Calu3 (cell line): ENCODE measurements at regions of chr3 and their contacts with region 1.

Region 1: GRCh38 chr3:43215663-43216275 is 70.6 kb upstream of the SNRK start:
- DNase-seq: peak; percentile 33
- H3K4me3 Mint-ChIP-seq: no peak overlapping the region
- H3K27ac Mint-ChIP-seq: peak overlapping the region; percentile 92
- H3K4me1 Mint-ChIP-seq: peaks cover 55% of the 10 kb centered on the region
- H3K27me3 Mint-ChIP-seq: no peaks in the 10 kb centered on the region
- CTCF ChIP-seq: peak; percentile 25

Region 2: DNA sequence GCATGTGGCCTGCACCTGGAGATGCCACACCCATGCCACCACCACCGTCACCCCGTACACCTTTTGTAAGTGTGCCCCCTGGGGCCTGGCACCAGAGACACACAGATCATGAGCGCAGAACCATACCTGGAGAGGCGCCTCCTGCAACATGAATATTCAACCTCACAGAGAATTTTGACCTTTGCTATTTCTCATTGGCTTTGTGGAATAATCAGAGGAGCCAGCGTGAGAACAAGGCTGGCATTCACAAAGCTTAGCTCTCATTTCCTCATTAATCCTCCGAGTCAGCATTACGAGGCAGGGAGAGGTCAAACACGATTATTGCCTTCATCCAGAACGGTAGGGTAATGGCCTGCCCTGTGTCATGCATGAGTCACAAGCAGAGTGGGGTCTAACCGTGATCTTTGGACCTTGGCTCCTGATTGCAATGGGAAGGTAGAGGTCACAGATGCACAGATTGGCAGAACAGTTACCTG is 36.8 kb before region 1 on chr3:
- CTCF ChIA-PET with region 1: interaction called, 9 read pairs
- intact Hi-C with region 1: loop called (anchors 1 kb)
- DNase-seq: peak; percentile 75
- H3K4me3 Mint-ChIP-seq: no peak overlapping the region
- H3K27ac Mint-ChIP-seq: peak overlapping the region; percentile 78
- H3K4me1 Mint-ChIP-seq: peaks cover 65% of the 10 kb centered on the region
- H3K27me3 Mint-ChIP-seq: no peaks in the 10 kb centered on the region
- CTCF ChIP-seq: no peak

Region 3: DNA sequence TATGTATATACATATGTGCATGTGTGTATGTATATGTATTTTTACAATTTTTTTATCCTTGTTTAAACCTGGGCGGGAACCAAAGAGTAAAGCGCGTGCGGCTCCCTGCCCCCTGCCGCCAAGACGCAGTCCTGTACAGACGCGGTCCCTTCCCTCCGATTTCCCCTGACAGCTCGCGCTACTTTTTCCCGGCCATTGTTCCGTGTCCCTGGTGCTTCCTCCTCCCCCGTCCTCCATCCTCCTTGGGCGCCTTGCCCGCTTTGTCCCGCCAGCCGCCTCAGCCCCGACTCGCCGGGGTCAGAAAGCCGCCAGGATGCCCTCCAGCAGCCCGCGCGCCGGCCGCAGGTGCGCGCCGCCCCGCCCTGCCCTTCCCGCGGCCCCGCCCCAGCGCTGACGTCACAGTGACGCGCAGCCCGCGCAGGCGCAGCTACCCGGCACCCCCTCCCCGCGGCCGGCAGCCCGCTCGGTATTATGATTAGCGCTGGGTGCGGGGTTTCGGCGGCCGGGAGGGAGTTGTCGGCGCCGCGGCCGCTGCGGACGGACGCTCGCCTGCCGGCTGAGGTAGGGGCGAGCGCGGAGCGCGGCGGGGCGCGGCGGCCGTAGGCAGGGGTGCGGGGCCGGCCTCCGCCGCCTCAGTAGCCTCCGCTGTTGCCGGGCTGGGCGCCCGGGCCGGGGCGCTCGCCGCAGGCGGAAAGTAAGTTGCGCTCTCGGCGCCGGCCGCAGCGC is 70.5 kb after region 1 on chr3 and contains the start of gene SNRK:
- CTCF ChIA-PET with region 1: interaction called, 4 read pairs
- intact Hi-C with region 1: loop called (anchors 2 kb)
- DNase-seq: peak; percentile 95
- H3K4me3 Mint-ChIP-seq: peak within 1 kb of the TSS; percentile 77
- H3K27ac Mint-ChIP-seq: peak within 1 kb of the TSS; percentile 89
- H3K4me1 Mint-ChIP-seq: peaks cover 30% of the 10 kb centered on the region
- H3K27me3 Mint-ChIP-seq: no peaks in the 10 kb centered on the region
- CTCF ChIP-seq: no peak
- total RNA-seq, gene SNRK: 21.0 and 21.8 TPM in 2 replicates

Region 4: GRCh38 chr3:43378066-43378935 is 162.5 kb after region 1 on chr3:
- CTCF ChIA-PET with region 1: interaction called, 3 read pairs
- intact Hi-C with region 1: loop called (anchors 2 kb)
- DNase-seq: peak; percentile 67
- H3K4me3 Mint-ChIP-seq: no peak overlapping the region
- H3K27ac Mint-ChIP-seq: no peak overlapping the region
- H3K4me1 Mint-ChIP-seq: no peaks in the 10 kb centered on the region
- H3K27me3 Mint-ChIP-seq: no peaks in the 10 kb centered on the region
- CTCF ChIP-seq: peak; percentile 51

Region 5: GRCh38 chr3:43742920-43743319 is 527.2 kb after region 1 on chr3:
- CTCF ChIA-PET with region 1: no interaction called
- intact Hi-C with region 1: no loop called
- DNase-seq: no peak
- H3K4me3 Mint-ChIP-seq: no peak overlapping the region
- H3K27ac Mint-ChIP-seq: no peak overlapping the region
- H3K4me1 Mint-ChIP-seq: no peaks in the 10 kb centered on the region
- H3K27me3 Mint-ChIP-seq: no peaks in the 10 kb centered on the region
- CTCF ChIP-seq: no peak